ENCODE measurements at regions of chr11 and their contacts with region 1.

Region 1: GRCh38 chr11:57657194-57658022 is at the start of gene CLP1:
- DNase-seq: peak; percentile 97 to 99
- ATAC-seq: peak; percentile 95 to 100 (median 98)
- H3K4me3 ChIP-seq: peak within 1 kb of the TSS; percentile 86
- H3K4me3 Mint-ChIP-seq: peak within 1 kb of the TSS; percentile 100
- H3K27ac ChIP-seq: peak within 1 kb of the TSS; percentile 90
- H3K27ac Mint-ChIP-seq: peak within 1 kb of the TSS; percentile 96 to 99
- H3K4me1 ChIP-seq: peaks cover 12% of the 10 kb centered on the region
- H3K4me1 Mint-ChIP-seq: peaks cover 27 to 29% of the 10 kb centered on the region in 2 donors
- H3K27me3 ChIP-seq: no peaks in the 10 kb centered on the region
- H3K27me3 Mint-ChIP-seq: no peaks in the 10 kb centered on the region
- CTCF ChIP-seq: no peak
- total RNA-seq, gene CLP1: 18.5 to 23.1 (median 22.8) TPM

Region 2: GRCh38 chr11:59142530-59143507 is 1485.4 kb after region 1 on chr11 and contains the start of gene FAM111A:
- intact Hi-C with region 1: loop called (anchors 5 kb)
- DNase-seq: peak; percentile 75 to 94
- ATAC-seq: peak; percentile 83 to 92 (median 85)
- H3K4me3 ChIP-seq: peak within 1 kb of the TSS; percentile 88
- H3K4me3 Mint-ChIP-seq: peak within 1 kb of the TSS; percentile 100
- H3K27ac ChIP-seq: peak within 1 kb of the TSS; percentile 94
- H3K27ac Mint-ChIP-seq: peak within 1 kb of the TSS; percentile 95 to 98
- H3K4me1 ChIP-seq: peaks cover 18% of the 10 kb centered on the region
- H3K4me1 Mint-ChIP-seq: peaks cover 50 to 52% of the 10 kb centered on the region in 2 donors
- H3K27me3 ChIP-seq: no peaks in the 10 kb centered on the region
- H3K27me3 Mint-ChIP-seq: no peaks in the 10 kb centered on the region
- CTCF ChIP-seq: no peak
- total RNA-seq, gene FAM111A: 93.7 to 125 (median 102) TPM

Measured in natural killer cell (primary cell).